Calu3 (cell line): ENCODE measurements at regions of chr6 and their contacts with region 1.

Region 1: GRCh38 chr6:56279346-56280080 is 32.1 kb upstream of the COL21A1 start:
- DNase-seq: peak; percentile 47
- H3K4me3 Mint-ChIP-seq: peak overlapping the region; percentile 14
- H3K27ac Mint-ChIP-seq: peak overlapping the region; percentile 86
- H3K4me1 Mint-ChIP-seq: peaks cover 34% of the 10 kb centered on the region
- H3K27me3 Mint-ChIP-seq: no peaks in the 10 kb centered on the region
- CTCF ChIP-seq: no peak

Region 2: DNA sequence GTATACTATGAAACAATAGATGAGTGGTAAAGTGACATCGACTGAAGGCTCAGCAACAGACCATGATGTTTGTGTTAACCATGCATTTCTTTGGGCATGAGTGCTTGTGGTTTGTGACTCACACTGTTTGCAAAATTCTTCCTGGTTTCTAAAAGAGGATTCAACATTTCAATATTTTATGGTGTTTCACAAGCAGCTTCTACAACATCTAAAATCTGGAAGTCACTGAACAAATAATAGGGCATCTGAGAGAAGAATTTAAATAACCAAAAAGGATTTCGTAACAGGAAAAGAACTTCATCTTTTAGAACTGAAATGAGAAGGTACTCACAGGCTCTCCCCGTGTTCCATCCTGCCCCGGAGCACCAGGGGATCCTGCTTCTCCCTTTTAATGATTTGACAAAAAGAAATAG is 178.4 kb before region 1 on chr6:
- CTCF ChIA-PET with region 1: no interaction called
- intact Hi-C with region 1: loop called (anchors 10 kb)
- DNase-seq: peak; percentile 34
- H3K4me3 Mint-ChIP-seq: peak overlapping the region; percentile 44
- H3K27ac Mint-ChIP-seq: peak overlapping the region; percentile 79
- H3K4me1 Mint-ChIP-seq: peaks cover 23% of the 10 kb centered on the region
- H3K27me3 Mint-ChIP-seq: no peaks in the 10 kb centered on the region
- CTCF ChIP-seq: no peak

Region 3: GRCh38 chr6:56156643-56157042 is 122.9 kb before region 1 on chr6:
- CTCF ChIA-PET with region 1: no interaction called
- intact Hi-C with region 1: loop called (anchors 5 kb)
- DNase-seq: peak; percentile 52
- H3K4me3 Mint-ChIP-seq: no peak overlapping the region
- H3K27ac Mint-ChIP-seq: peak overlapping the region; percentile 86
- H3K4me1 Mint-ChIP-seq: peaks cover 11% of the 10 kb centered on the region
- H3K27me3 Mint-ChIP-seq: no peaks in the 10 kb centered on the region
- CTCF ChIP-seq: no peak